Posterior vena cava (tissue), 2 donors: ENCODE measurements at regions of chr2 and their contacts with region 1.

Region 1: GRCh38 chr2:196652869-196653268 is 13.4 kb downstream of the CCDC150 start:
- DNase-seq: no peak

Region 2: GRCh38 chr2:195590861-195591205 is 1062.0 kb before region 1 on chr2:
- intact Hi-C with region 1: no loop called
- DNase-seq: no peak

Region 3: DNA sequence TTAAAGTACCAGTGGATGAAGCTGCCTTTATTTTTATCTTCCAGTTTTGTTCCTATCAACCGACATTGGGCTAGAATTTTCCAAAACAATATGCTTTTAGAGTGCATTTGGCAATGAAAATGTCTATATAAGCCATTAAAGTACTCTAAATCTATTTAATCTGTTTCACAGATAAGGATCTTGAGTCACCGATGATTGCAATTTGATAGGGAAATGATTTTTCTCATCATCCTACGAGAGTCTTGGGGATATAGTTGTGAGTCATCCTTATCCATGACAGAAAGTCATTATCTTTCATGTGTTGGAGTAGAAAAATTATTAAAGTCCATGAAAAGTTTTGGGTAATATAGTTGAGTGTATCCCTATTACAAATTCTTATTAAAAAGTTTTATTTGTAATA is 969.7 kb before region 1 on chr2:
- intact Hi-C with region 1: no loop called
- DNase-seq: no peak

Region 4: DNA sequence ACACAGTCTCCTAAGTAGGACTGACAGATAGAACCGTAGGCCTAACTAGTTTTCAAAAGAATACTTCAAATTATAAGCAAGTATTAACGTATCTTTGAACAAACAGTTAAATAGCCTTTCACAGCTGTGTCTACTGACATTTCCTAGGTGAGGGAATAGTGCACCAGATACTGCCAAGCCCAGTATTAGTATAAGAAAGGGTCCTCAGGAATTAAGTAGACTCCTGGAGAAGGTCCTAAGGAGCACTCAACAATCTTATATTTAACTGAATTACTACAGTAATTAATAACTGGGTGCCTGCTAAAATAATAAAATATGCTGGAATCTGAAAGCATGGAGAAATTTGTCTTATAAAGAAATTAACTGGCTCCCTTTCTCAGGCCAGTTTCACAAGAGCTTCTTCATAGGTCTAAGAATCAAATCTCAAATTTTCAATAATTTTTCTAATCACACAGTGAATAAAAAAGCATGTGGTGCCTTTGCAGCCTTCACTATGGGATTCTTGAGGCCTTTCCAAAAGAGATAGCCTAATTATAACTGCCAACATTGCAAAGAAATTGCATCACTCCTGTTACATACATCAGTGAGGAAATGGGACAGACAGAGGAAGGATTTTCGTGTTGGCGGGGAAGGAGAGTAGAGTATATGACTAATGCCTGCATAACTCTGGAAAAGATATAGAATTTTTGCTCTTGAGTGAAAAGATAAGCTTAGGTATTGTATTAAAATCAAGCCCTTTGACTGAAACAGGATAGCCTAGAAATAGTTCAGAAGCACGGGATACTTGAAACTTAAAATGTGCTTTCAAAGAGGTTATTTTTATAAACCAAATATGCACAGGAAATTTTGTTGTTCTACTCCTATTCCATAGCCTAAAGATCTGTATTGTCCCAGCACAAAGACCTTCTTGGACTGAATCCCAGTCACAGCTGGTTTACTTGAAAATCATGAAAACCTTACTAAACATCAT is 252.9 kb before region 1 on chr2:
- intact Hi-C with region 1: no loop called
- DNase-seq: no peak

Region 5: GRCh38 chr2:196566961-196567666 is 85.8 kb before region 1 on chr2:
- intact Hi-C with region 1: no loop called
- DNase-seq: no peak

Region 6: DNA sequence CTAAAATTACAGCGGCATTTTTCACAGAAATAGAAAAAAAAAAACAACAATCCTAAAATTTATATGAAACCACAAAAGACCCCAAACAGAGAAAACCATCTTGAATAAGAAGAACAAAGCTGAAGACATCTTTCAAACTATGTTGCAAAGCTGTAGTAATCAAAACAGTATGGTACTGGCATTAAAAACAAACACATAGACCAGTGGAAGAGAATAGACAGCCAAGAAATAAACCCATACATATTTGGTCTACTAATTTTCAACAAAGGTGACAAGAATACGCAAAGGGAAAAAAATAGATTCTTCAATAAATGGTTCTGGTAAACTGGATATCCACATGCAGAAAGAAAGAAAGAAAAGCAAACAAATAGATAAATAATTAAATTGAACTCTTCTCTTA is 22.3 kb before region 1 on chr2:
- intact Hi-C with region 1: loop called in 1 of 2 experiments (anchors 1 kb)
- DNase-seq: no peak